MCF 10A (cell line): ENCODE measurements at regions of chr1 and their contacts with region 1.

Region 1: DNA sequence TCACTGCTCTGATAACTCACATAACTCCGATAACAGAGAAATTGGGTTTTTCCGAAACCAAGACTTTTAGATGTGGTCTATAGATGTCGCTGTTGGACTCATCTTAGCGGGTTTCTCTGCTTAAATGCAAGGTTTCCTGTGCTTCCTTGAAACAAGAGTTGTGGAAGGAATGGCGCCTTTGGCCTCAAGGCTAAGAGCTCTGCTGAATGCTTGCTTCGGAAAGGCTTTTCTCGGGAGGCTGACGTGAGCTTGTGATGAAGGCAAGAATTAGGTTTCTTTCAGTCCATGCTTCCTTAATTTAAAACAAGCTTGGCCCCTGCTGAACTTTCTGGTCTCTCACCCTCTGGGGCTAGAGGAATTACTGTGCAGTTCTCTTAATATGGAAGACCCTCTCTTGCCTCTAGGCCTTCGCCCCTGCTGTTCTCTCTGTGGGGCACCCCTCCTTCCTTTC is 113.5 kb downstream of the MAP3K21 start:
- DNase-seq: peak; percentile 90
- H3K4me3 Mint-ChIP-seq: no peak overlapping the region
- H3K27ac Mint-ChIP-seq: no peak overlapping the region
- H3K4me1 Mint-ChIP-seq: peaks cover 18% of the 10 kb centered on the region
- H3K27me3 Mint-ChIP-seq: no peaks in the 10 kb centered on the region
- CTCF ChIP-seq: peak; percentile 99

Region 2: GRCh38 chr1:233140974-233141373 is 300.0 kb before region 1 on chr1:
- CTCF ChIA-PET with region 1: no interaction called
- POLR2A ChIA-PET with region 1: no interaction called
- intact Hi-C with region 1: no loop called
- DNase-seq: no peak
- H3K4me3 Mint-ChIP-seq: no peak overlapping the region
- H3K27ac Mint-ChIP-seq: no peak overlapping the region
- H3K4me1 Mint-ChIP-seq: no peaks in the 10 kb centered on the region
- H3K27me3 Mint-ChIP-seq: no peaks in the 10 kb centered on the region
- CTCF ChIP-seq: no peak

Region 3: DNA sequence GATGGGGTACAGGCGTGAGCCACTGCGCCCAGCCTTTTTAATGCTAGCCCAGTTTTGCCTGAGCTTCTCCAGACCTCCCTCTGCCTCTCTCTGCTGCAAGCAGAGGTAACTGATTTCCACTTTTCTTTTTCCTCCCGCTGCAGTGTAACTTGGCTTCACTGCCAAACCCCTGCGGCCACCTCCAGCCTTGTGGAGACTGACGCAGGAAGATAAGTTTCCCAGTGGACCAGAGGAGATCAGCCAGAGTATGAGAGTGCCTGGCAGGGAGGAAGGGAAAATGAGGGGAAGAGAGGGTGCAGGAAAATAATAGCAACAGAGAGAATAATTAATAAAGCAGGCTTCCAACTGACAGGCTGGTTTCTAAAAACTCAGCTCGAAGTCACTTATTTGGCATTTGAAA is 289.1 kb before region 1 on chr1:
- CTCF ChIA-PET with region 1: no interaction called
- POLR2A ChIA-PET with region 1: no interaction called
- intact Hi-C with region 1: no loop called
- DNase-seq: no peak
- H3K4me3 Mint-ChIP-seq: no peak overlapping the region
- H3K27ac Mint-ChIP-seq: peak overlapping the region; percentile 49
- H3K4me1 Mint-ChIP-seq: no peaks in the 10 kb centered on the region
- H3K27me3 Mint-ChIP-seq: no peaks in the 10 kb centered on the region
- CTCF ChIP-seq: no peak

Region 4: GRCh38 chr1:233304489-233305102 is 136.4 kb before region 1 on chr1:
- CTCF ChIA-PET with region 1: interaction called, 23 read pairs
- POLR2A ChIA-PET with region 1: no interaction called
- intact Hi-C with region 1: loop called (anchors 5 kb)
- DNase-seq: peak; percentile 63
- H3K4me3 Mint-ChIP-seq: no peak overlapping the region
- H3K27ac Mint-ChIP-seq: no peak overlapping the region
- H3K4me1 Mint-ChIP-seq: no peaks in the 10 kb centered on the region
- H3K27me3 Mint-ChIP-seq: no peaks in the 10 kb centered on the region
- CTCF ChIP-seq: peak; percentile 98

Region 5: DNA sequence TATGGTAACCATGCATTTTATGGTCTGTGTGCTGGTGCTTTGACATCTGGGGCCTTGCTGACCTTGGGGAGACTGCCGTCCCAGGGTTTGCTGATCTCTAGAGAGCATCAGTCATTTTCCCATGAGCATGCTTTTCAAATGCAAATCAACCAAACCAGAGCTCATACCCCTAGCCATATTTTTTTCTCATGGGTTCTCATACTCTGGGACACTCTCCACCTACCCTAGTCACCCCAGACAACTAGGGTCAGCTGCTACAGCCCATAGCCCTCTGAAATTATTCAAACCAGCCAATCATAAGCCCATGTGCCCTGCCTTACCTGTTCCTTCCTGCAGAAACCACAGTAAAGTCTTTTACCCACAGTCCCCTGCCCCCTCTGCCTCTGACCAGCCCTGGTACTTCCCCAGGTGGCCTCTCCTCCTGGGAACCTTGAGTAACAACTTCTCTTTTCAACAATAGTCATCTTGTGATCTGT is 18.5 kb after region 1 on chr1:
- CTCF ChIA-PET with region 1: interaction called, 38 read pairs
- POLR2A ChIA-PET with region 1: no interaction called
- intact Hi-C with region 1: no loop called
- DNase-seq: no peak
- H3K4me3 Mint-ChIP-seq: no peak overlapping the region
- H3K27ac Mint-ChIP-seq: no peak overlapping the region
- H3K4me1 Mint-ChIP-seq: no peaks in the 10 kb centered on the region
- H3K27me3 Mint-ChIP-seq: no peaks in the 10 kb centered on the region
- CTCF ChIP-seq: no peak

Region 6: GRCh38 chr1:233627376-233627775 is 186.4 kb after region 1 on chr1:
- CTCF ChIA-PET with region 1: interaction called, 22 read pairs
- POLR2A ChIA-PET with region 1: interaction called, 8 read pairs
- intact Hi-C with region 1: no loop called
- DNase-seq: peak; percentile 42
- H3K4me3 Mint-ChIP-seq: no peak overlapping the region
- H3K27ac Mint-ChIP-seq: no peak overlapping the region
- H3K4me1 Mint-ChIP-seq: no peaks in the 10 kb centered on the region
- H3K27me3 Mint-ChIP-seq: no peaks in the 10 kb centered on the region
- CTCF ChIP-seq: no peak

Region 7: DNA sequence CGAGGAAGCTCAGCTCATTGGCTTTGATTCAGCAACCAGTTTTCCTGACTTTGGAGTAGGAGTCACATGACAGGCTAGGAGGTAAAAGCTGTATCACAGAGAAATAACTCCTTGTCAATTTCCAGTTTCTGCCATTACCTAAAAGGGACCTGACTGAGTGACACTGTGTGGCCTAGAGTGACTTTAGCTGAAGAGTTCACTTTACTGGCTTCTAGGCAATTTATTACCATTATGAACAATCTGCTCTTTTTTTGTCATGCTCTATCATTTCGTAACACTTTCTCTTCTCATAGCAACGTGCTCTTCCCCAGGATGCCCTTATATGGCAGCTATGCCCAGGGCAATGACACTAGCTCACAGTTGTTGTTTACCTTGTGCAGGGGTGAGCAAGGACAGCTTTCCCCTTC is 280.2 kb after region 1 on chr1:
- CTCF ChIA-PET with region 1: interaction called, 11 read pairs
- POLR2A ChIA-PET with region 1: interaction called, 4 read pairs
- intact Hi-C with region 1: no loop called
- DNase-seq: peak; percentile 84
- H3K4me3 Mint-ChIP-seq: no peak overlapping the region
- H3K27ac Mint-ChIP-seq: peak overlapping the region; percentile 22
- H3K4me1 Mint-ChIP-seq: peaks cover 32% of the 10 kb centered on the region
- H3K27me3 Mint-ChIP-seq: no peaks in the 10 kb centered on the region
- CTCF ChIP-seq: no peak

Region 8: DNA sequence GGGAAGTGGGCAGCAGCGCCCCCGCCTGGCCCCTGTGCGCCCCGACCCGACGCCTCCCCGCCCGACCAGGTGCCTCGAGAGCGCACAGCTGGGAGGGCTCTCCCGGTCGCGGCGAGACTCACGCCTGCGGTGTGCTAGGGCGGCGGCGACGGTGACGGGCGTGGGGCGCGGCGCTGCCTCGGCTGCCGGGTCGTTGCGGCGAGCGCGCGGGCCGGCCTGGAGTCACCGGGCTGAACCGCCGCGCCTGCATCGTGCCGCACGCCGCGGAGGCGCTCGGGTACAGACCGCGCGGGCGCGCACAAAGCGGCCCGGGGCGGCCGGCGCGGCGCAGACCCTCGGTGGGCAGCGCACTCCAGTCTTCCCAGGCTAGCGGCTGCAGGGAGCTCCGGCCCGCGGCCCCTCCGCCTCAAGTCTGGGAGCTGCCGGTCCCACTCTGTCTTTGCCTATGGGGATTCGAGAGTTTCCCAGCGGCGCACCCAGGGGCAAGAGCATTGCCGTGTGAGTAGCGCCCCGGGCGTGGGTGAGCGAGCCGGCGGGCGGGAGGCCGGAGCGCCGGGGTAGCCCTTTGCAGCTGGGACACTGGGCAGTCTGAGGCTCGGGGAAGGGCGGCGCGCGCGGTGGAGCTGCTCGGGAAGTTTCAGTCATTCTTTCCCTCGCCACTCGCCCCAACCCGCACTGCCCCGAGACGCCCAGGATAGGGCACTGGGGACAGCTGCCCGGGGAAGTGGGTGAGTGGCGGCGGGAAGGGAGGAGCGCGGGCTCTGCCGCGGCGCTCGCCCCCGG is 463.8 kb after region 1 on chr1 and contains the start of gene SLC35F3:
- CTCF ChIA-PET with region 1: interaction called, 19 read pairs
- POLR2A ChIA-PET with region 1: interaction called, 4 read pairs
- intact Hi-C with region 1: loop called (anchors 1 kb)
- DNase-seq: peak; percentile 87
- H3K4me3 Mint-ChIP-seq: peak within 1 kb of the TSS; percentile 78
- H3K27ac Mint-ChIP-seq: peak within 1 kb of the TSS; percentile 9
- H3K4me1 Mint-ChIP-seq: peaks cover 22% of the 10 kb centered on the region
- H3K27me3 Mint-ChIP-seq: peaks cover 11% of the 10 kb centered on the region
- CTCF ChIP-seq: peak; percentile 91
- total RNA-seq, gene SLC35F3: 2.9 and 3.3 TPM in 2 replicates

Region 9: GRCh38 chr1:234309598-234310459 is 868.9 kb after region 1 on chr1:
- CTCF ChIA-PET with region 1: interaction called, 10 read pairs
- POLR2A ChIA-PET with region 1: no interaction called
- intact Hi-C with region 1: no loop called
- DNase-seq: peak; percentile 89
- H3K4me3 Mint-ChIP-seq: no peak overlapping the region
- H3K27ac Mint-ChIP-seq: no peak overlapping the region
- H3K4me1 Mint-ChIP-seq: peaks cover 2% of the 10 kb centered on the region
- H3K27me3 Mint-ChIP-seq: no peaks in the 10 kb centered on the region
- CTCF ChIP-seq: peak; percentile 99